Breast epithelium (tissue), 4 donors: ENCODE measurements at regions of chr4 and their contacts with region 1.

Region 1: DNA sequence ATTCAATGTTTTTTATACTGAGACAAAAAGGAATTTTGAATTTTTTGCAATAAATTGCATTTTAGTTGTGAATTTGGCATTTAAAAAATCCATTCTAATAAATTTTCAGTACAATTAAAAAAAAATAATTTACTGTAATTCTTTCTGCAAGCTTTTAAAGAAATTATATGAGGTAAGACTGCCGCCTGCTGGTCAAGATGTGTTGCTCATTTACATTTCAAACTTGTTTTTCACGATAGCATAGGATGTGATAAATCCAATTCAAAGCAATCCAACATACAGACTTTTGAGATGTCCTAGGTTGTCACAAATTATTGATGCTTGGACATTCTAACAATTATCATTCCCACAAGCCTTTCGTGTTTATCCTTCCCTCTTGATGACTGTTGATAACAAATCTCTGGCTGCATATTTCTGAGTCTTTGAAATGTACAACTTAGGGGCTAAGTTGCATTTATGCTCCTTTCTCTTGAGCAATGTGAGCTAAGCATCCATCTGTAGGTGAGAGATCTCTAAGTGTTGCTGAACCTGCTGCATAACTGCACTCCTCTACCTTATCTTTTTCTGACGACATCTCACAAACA is 21.7 kb upstream of the MFAP3L start:
- DNase-seq: peak; percentile 30 to 57
- H3K4me3 ChIP-seq: no peak overlapping the region
- H3K27ac ChIP-seq: no peak overlapping the region
- H3K4me1 ChIP-seq: no peaks in the 10 kb centered on the region
- H3K27me3 ChIP-seq: no peaks in the 10 kb centered on the region
- CTCF ChIP-seq: peak; percentile 79 to 86 (median 80)
- POLR2A ChIP-seq: no peak

Region 2: GRCh38 chr4:169807934-169808509 is 239.8 kb before region 1 on chr4:
- intact Hi-C with region 1: loop called (anchors 5 kb)
- DNase-seq: no peak
- H3K4me3 ChIP-seq: no peak overlapping the region
- H3K27ac ChIP-seq: no peak overlapping the region
- H3K4me1 ChIP-seq: peaks cover 0 to 3% of the 10 kb centered on the region in 2 donors
- H3K27me3 ChIP-seq: no peaks in the 10 kb centered on the region
- CTCF ChIP-seq: no peak
- POLR2A ChIP-seq: no peak

Region 3: GRCh38 chr4:170027181-170027829 is 20.6 kb before region 1 on chr4:
- intact Hi-C with region 1: no loop called
- DNase-seq: peak; percentile 84 to 89
- H3K4me3 ChIP-seq: peak overlapping the region; percentile 90 to 99 (median 92)
- H3K27ac ChIP-seq: peak overlapping the region; percentile 57 to 90
- H3K4me1 ChIP-seq: peaks cover 0 to 5% of the 10 kb centered on the region in 2 donors
- H3K27me3 ChIP-seq: no peaks in the 10 kb centered on the region
- CTCF ChIP-seq: peak in 1 of 3 donors; percentile 13
- POLR2A ChIP-seq: no peak